ENCODE measurements at regions of chr5 and their contacts with region 1.

Region 1: GRCh38 chr5:138282920-138283742 is 8.7 kb upstream of the GFRA3 start:
- DNase-seq: peak; percentile 81 to 89 (median 83)
- H3K4me3 ChIP-seq: no peak overlapping the region
- H3K27ac ChIP-seq: no peak overlapping the region
- H3K4me1 ChIP-seq: no peaks in the 10 kb centered on the region
- H3K27me3 ChIP-seq: no peaks in the 10 kb centered on the region

Region 2: DNA sequence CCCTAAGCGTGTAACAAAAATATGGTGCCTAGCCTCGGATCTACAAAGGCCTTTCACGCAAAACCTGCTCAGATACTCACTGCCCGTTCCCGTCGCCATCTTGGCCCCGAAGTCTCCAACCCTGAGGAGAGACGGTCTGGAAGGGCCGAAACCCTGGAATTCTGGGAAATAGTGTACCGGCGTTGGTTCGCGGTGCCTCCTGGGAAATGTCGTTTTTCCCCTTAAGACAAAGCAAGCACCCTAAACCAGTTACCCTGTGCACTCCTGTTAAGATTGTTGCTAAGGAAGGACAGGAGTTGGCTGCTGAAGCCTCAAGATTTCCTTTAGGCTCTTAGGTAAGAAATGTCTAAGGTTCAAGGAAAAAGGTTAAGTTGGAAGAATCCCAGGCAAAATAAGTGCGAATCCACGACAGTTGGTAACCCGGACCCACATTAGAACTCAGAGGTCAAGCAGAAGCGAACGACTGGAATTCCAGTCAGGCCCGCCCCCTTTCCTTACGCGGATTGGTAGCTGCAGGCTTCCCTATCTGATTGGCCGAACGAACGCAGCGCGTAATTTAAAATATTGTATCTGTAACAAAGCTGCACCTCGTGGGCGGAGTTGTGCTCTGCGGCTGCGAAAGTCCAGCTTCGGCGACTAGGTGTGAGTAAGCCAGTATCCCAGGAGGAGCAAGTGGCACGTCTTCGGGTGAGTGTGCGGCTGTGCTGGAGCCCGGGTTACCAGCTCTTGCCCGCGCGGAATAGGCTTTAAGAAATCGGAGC is 104.4 kb before region 1 on chr5 and contains the starts of genes BRD8 and KIF20A:
- CTCF ChIA-PET with region 1: interaction called, 113 read pairs
- POLR2A ChIA-PET with region 1: no interaction called
- DNase-seq: peak; percentile 94 to 96 (median 95)
- H3K4me3 ChIP-seq: peak within 1 kb of the TSS; percentile 69 to 100 (median 98)
- H3K27ac ChIP-seq: peak within 1 kb of the TSS; percentile 88 to 91
- H3K4me1 ChIP-seq: peaks cover 13 to 25% (median 21%) of the 10 kb centered on the region in 4 experiments
- H3K27me3 ChIP-seq: no peaks in the 10 kb centered on the region

Region 3: GRCh38 chr5:138213161-138214029 is 69.7 kb before region 1 on chr5 and contains the start of gene CDC23:
- CTCF ChIA-PET with region 1: interaction called, 114 read pairs
- POLR2A ChIA-PET with region 1: no interaction called
- DNase-seq: peak; percentile 97 to 98 (median 97)
- H3K4me3 ChIP-seq: peak within 1 kb of the TSS; percentile 80 to 100 (median 99)
- H3K27ac ChIP-seq: peak within 1 kb of the TSS; percentile 94 to 97
- H3K4me1 ChIP-seq: peaks cover 6 to 20% (median 12%) of the 10 kb centered on the region in 4 experiments
- H3K27me3 ChIP-seq: no peaks in the 10 kb centered on the region

Region 4: DNA sequence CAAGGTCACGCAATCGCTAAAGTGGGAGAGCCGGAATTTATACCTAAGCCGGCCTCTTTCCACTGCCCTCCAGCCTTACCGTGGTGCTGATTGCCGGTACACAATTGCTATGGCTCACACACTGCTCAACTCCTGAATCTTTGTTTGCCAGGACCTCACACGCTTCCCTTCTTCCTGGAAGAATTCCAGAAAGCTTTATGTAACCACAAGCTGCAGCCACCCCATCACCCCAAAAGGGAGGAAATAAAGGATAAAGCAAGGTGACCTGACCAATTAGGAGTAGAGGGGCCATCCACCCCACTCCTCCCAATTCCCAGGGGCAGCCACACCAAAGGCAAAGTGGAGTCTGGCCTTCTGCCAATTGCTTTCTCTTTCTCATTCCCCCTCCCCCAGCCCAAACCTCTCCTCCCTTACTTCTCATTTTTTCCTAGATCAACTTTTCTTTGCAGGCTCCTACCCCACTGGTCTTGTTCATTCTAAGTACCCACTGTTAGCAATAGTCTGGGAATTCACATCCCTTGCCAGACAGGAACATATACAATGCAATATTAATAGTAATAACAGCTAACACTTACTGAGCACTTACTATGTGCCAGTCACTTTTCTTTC is 52.0 kb before region 1 on chr5:
- CTCF ChIA-PET with region 1: interaction called, 114 read pairs
- POLR2A ChIA-PET with region 1: no interaction called
- DNase-seq: peak in 2 of 3 donors; percentile 44 to 56
- H3K4me3 ChIP-seq: no peak overlapping the region
- H3K27ac ChIP-seq: no peak overlapping the region
- H3K4me1 ChIP-seq: peaks cover 0 to 8% (median 5%) of the 10 kb centered on the region in 4 experiments
- H3K27me3 ChIP-seq: peaks cover 0 to 5% (median 0%) of the 10 kb centered on the region in 5 experiments

Measured in common myeloid progenitor, CD34-positive (primary cell).